Activated T-helper 1 cell treated with anti-CD3 and anti-CD28 coated beads, Interleukin-12 subunit alpha, Interleukin-12 subunit beta, Interleukin-2, Interleukin-4 antibody, amounts not matched to agents 30 ng/mL and 10 ng/mL and 1 ng/mL, durations not matched to agents 14 hours and 24 hours and 36 hours (primary cell): ENCODE measurements at regions of chr5 and their contacts with region 1.

Region 1: DNA sequence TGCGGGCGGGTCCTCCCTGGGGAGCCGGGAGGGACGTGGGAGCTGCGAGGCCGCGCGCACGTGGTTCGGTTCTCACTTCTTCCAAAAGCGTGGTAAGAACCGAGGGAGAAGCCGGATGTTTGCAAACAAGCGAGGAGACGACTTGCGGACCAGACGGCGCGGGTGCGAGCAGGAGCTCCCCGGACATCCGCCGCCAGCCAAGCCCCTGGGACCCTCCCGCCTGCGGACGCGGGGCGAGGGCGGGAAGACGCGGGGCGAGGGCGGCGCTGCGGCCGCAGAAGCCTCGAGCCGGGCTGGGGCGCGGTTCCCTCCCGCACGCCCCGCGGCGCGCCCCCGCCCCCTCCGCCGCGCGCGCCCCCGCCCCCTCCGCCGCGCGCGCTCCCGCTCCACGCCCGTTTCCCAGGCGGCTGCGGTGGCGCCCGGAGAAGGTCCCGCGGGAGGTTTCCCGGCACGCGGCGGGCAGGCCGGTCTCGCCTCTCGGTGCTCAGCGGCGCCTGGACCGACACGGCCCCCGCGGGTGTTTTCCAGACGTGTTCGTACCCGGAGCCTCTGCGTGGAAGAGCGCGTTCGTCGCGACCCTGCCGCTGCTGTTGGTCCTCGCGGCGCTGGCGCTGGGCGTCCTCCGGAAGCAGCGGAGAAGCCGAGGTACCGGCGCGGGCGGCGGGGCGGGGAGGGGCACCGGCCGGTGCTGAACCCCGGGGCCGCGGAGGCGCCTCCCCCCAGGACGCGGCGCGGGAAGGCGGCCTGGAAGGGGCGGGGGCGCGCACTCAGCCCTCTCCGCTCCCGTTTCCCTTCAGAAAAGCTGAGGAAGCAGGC is 12.8 kb downstream of the BTNL9 start:
- DNase-seq: no peak
- H3K4me3 Mint-ChIP-seq: peak overlapping the region; percentile 72
- H3K27ac Mint-ChIP-seq: no peak overlapping the region
- H3K4me1 Mint-ChIP-seq: peaks cover 6% of the 10 kb centered on the region
- H3K27me3 Mint-ChIP-seq: peaks cover 63% of the 10 kb centered on the region

Region 2: DNA sequence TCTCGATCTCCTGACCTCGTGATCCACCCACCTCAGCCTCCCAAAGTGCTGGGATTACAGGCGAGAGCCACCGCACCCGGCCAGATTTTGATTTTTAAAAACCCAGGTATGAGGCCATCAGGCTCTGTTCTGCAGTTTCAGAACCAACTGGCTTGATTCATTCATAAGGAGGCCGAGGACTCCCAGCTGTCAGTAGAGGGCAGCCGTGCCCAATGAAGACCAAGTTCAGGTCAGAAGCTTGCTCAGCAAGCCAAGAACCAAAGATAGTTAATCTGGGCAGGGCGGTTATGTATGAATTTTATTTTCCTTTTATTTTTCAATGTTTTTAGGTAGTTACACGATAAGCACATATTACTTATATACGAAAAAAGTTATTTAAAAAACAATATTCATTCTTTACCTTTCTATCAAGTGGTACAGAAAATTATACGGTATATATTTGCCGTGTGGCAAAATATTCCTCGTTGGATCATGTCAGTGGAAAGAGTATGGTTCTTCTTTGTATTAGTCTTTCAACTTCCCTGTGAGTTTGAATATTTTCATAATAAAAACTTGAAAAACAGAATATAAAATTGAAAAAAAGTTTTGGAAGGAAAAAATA is 268.3 kb before region 1 on chr5:
- intact Hi-C with region 1: loop called (anchors 10 kb)
- DNase-seq: peak; percentile 47
- H3K4me3 Mint-ChIP-seq: no peak overlapping the region
- H3K27ac Mint-ChIP-seq: no peak overlapping the region
- H3K4me1 Mint-ChIP-seq: peaks cover 15% of the 10 kb centered on the region
- H3K27me3 Mint-ChIP-seq: no peaks in the 10 kb centered on the region

Region 3: DNA sequence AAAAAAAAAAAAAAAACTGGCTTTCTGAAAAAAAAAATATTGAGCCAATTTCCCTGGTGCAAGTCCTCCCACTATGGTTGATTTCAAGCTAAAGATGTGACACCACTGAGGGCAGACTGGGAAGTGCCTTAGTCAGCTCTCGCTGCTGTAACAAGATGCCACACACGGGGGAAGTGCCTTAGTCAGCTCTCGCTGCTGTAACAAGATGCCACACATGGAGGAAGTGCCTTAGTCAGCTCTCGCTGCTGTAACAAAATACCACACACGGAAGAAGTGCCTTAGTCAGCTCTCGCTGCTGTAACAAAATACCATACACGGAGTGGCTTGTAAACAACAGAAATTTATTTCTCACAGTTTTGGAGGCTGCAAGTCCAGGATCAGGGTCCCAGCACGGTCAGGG is 10.6 kb after region 1 on chr5:
- intact Hi-C with region 1: no loop called
- DNase-seq: no peak
- H3K4me3 Mint-ChIP-seq: no peak overlapping the region
- H3K27ac Mint-ChIP-seq: no peak overlapping the region
- H3K4me1 Mint-ChIP-seq: no peaks in the 10 kb centered on the region
- H3K27me3 Mint-ChIP-seq: peaks cover 47% of the 10 kb centered on the region

Region 4: GRCh38 chr5:181114844-181115778 is 62.2 kb after region 1 on chr5:
- intact Hi-C with region 1: loop called (anchors 10 kb)
- DNase-seq: no peak
- H3K4me3 Mint-ChIP-seq: peak overlapping the region; percentile 20
- H3K27ac Mint-ChIP-seq: no peak overlapping the region
- H3K4me1 Mint-ChIP-seq: peaks cover 8% of the 10 kb centered on the region
- H3K27me3 Mint-ChIP-seq: peaks cover 51% of the 10 kb centered on the region

Region 5: DNA sequence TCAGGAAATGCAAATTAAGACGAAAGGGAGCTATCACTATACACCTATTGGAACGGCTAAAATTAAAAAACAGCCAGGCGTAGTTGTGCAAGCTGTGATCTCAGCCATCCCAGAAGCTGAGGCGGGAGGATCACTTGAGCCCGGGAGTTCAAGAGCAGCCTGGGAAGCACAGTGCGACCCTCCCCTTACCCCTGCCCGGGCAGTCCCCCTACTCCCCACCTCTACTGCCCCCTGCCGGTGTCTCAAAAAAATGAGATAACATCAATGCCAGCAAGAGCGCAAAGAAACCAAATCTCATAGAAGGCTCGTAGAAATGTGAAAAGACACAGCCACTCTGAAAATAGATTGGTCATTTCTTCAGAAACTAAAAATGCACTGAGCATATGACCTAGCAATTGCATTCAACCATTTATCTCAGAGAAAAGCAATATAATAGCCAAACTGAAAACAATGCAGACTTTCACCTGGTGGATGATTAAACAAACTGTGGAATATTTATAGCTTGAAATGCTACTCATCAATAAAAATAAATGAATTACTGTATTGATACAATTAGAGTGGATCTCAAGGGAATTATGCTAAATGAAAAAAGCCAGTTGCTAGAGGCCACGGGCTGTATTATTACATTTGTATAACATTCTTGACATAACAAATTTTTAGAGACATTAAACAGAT is 115.1 kb after region 1 on chr5:
- intact Hi-C with region 1: loop called (anchors 5 kb)
- DNase-seq: no peak
- H3K4me3 Mint-ChIP-seq: no peak overlapping the region
- H3K27ac Mint-ChIP-seq: no peak overlapping the region
- H3K4me1 Mint-ChIP-seq: peaks cover 66% of the 10 kb centered on the region
- H3K27me3 Mint-ChIP-seq: peaks cover 49% of the 10 kb centered on the region